ENCODE measurements at regions of chr13 and their contacts with region 1.

Region 1: GRCh38 chr13:95834134-95834765 is 157.3 kb downstream of the DNAJC3 start:
- DNase-seq: peak; percentile 78
- H3K4me3 Mint-ChIP-seq: no peak overlapping the region
- H3K27ac Mint-ChIP-seq: no peak overlapping the region
- H3K4me1 Mint-ChIP-seq: no peaks in the 10 kb centered on the region
- H3K27me3 Mint-ChIP-seq: peaks cover 10% of the 10 kb centered on the region

Region 2: DNA sequence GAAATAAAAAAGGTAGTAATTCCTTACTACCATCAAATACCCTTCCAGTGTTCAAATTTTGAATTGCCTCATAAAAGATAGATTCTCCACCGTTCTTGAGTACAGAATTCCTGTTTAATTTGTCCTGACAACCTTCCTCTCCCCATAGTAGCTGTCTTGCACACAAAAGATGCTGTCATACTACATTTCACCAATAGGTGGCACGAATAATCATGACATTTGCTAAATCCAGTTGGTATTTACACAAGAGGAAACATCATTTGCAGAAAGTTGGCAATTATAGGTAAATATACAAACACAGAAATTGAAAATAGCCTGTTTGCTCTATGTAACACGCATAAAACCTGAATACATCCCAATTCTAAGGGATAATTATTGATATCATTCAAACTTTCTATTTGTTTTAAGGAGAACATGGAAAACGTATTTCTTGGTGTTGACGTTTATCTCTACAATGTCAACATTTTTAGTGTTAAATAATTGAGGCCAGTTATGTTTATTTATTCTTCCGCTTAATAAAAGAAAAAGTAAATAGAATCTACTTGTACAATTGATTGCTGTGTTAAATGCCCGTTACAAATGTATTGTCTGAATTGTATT is 340.1 kb before region 1 on chr13:
- CTCF ChIA-PET with region 1: interaction called, 37 read pairs
- POLR2A ChIA-PET with region 1: no interaction called
- intact Hi-C with region 1: loop called (anchors 1 kb)
- DNase-seq: no peak
- H3K4me3 Mint-ChIP-seq: no peak overlapping the region
- H3K27ac Mint-ChIP-seq: no peak overlapping the region
- H3K4me1 Mint-ChIP-seq: no peaks in the 10 kb centered on the region
- H3K27me3 Mint-ChIP-seq: peaks cover 18% of the 10 kb centered on the region

Region 3: DNA sequence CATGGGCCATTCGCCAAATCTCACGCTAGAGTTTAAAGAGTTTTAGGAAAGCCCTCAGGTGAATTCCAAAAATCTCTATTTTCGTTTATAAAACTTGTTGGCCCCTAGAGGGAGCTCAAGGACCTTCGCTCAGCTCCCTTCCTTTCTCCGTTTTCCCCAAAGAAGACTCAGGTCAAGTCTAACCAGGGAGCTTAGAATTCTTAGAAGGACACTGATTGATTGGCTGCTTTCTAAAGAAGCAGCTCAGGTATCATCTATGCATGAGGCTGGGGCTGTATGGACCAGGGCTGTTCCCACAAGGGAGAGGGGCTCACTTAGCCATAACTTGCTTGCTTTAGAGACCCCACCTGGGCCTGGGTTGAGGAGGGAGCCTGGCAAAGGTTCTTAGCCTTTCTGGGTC is 210.2 kb before region 1 on chr13:
- CTCF ChIA-PET with region 1: interaction called, 192 read pairs
- POLR2A ChIA-PET with region 1: interaction called, 3 read pairs
- intact Hi-C with region 1: loop called (anchors 1 kb)
- DNase-seq: peak; percentile 12
- H3K4me3 Mint-ChIP-seq: no peak overlapping the region
- H3K27ac Mint-ChIP-seq: no peak overlapping the region
- H3K4me1 Mint-ChIP-seq: no peaks in the 10 kb centered on the region
- H3K27me3 Mint-ChIP-seq: peaks cover 6% of the 10 kb centered on the region

Region 4: GRCh38 chr13:95660981-95661581 is 173.2 kb before region 1 on chr13:
- CTCF ChIA-PET with region 1: interaction called, 9 read pairs
- POLR2A ChIA-PET with region 1: no interaction called
- intact Hi-C with region 1: loop called (anchors 1 kb)
- DNase-seq: no peak
- H3K4me3 Mint-ChIP-seq: no peak overlapping the region
- H3K27ac Mint-ChIP-seq: no peak overlapping the region
- H3K4me1 Mint-ChIP-seq: no peaks in the 10 kb centered on the region
- H3K27me3 Mint-ChIP-seq: peaks cover 16% of the 10 kb centered on the region

Region 5: GRCh38 chr13:95745752-95746151 is 88.5 kb before region 1 on chr13:
- CTCF ChIA-PET with region 1: no interaction called
- POLR2A ChIA-PET with region 1: no interaction called
- intact Hi-C with region 1: no loop called
- DNase-seq: no peak
- H3K4me3 Mint-ChIP-seq: no peak overlapping the region
- H3K27ac Mint-ChIP-seq: no peak overlapping the region
- H3K4me1 Mint-ChIP-seq: peaks cover 15% of the 10 kb centered on the region
- H3K27me3 Mint-ChIP-seq: no peaks in the 10 kb centered on the region

Region 6: GRCh38 chr13:95813139-95813538 is 21.1 kb before region 1 on chr13:
- CTCF ChIA-PET with region 1: interaction called, 27 read pairs
- POLR2A ChIA-PET with region 1: no interaction called
- intact Hi-C with region 1: no loop called
- DNase-seq: no peak
- H3K4me3 Mint-ChIP-seq: no peak overlapping the region
- H3K27ac Mint-ChIP-seq: no peak overlapping the region
- H3K4me1 Mint-ChIP-seq: no peaks in the 10 kb centered on the region
- H3K27me3 Mint-ChIP-seq: peaks cover 30% of the 10 kb centered on the region

Measured in activated CD4-positive, alpha-beta memory T cell treated with anti-CD3 and anti-CD28 coated beads for 36 hours (primary cell).